RWPE1 (cell line): ENCODE measurements at regions of chr10 and their contacts with region 1.

Region 1: GRCh38 chr10:49161411-49161997 is 26.7 kb downstream of the TMEM273 start:
- DNase-seq: no peak
- H3K27ac ChIP-seq: no peak overlapping the region
- CTCF ChIP-seq: no peak

Region 2: GRCh38 chr10:48976196-48976595 is 185.3 kb before region 1 on chr10:
- CTCF ChIA-PET with region 1: interaction called, 11 read pairs
- POLR2A ChIA-PET with region 1: no interaction called
- DNase-seq: peak; percentile 4
- H3K27ac ChIP-seq: no peak overlapping the region
- CTCF ChIP-seq: no peak